ENCODE measurements at regions of chr4 and their contacts with region 1.

Region 1: GRCh38 chr4:87235020-87235671 is 14.7 kb upstream of the KLHL8 start:
- DNase-seq: peak in 1 of 2 donors; percentile 10
- ATAC-seq: no peak
- H3K4me3 ChIP-seq: peak overlapping the region; percentile 11
- H3K4me3 Mint-ChIP-seq: peak overlapping the region; percentile 89
- H3K27ac ChIP-seq: no peak overlapping the region
- H3K27ac Mint-ChIP-seq: peak overlapping the region; percentile 78 to 87
- H3K4me1 ChIP-seq: peaks cover 4% of the 10 kb centered on the region
- H3K4me1 Mint-ChIP-seq: peaks cover 0 to 9% of the 10 kb centered on the region in 2 donors
- H3K27me3 ChIP-seq: no peaks in the 10 kb centered on the region
- H3K27me3 Mint-ChIP-seq: peaks cover 7 to 14% of the 10 kb centered on the region in 2 donors
- CTCF ChIP-seq: no peak

Region 2: GRCh38 chr4:86921608-86922252 is 313.4 kb before region 1 on chr4:
- intact Hi-C with region 1: loop called (anchors 2 kb)
- DNase-seq: no peak
- ATAC-seq: no peak
- H3K4me3 ChIP-seq: no peak overlapping the region
- H3K4me3 Mint-ChIP-seq: no peak overlapping the region
- H3K27ac ChIP-seq: no peak overlapping the region
- H3K27ac Mint-ChIP-seq: no peak overlapping the region
- H3K4me1 ChIP-seq: no peaks in the 10 kb centered on the region
- H3K4me1 Mint-ChIP-seq: peaks cover 0 to 4% of the 10 kb centered on the region in 2 donors
- H3K27me3 ChIP-seq: no peaks in the 10 kb centered on the region
- H3K27me3 Mint-ChIP-seq: no peaks in the 10 kb centered on the region
- CTCF ChIP-seq: no peak

Region 3: DNA sequence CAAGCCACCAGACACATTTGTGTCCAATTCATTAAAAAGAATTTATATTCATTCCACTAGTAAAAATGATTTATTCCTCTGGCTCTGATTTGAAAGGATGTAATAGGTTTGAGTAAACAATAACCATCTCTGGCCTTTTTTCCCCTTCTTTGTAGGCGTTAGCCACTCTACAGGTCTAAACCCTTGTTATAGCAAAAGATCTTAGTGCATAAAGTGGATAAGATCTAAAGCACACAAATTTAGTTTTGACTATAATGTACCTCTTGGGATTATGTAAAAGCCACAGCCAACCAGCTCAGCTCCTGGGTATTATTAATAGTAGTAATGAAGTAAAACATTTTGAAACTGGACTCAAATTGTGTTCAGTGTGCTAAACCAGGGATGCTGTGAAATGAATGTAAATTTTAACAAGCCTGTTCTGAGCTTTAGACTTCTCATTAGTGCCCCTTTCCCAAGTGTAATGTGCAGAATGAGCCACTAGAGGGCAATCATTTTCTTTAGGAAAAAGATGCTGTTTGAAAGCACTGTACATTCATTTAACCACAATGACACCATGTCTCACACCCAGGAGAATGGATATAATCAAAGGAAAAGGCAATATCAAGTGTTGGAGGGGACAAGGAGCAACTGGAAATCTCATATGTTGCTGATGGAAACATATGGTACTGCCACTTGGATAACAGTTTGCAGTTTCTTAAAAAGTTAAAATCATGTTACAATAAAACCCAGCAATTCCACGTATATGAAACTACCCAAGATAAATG is 84.5 kb before region 1 on chr4:
- intact Hi-C with region 1: loop called (anchors 1 kb)
- DNase-seq: peak in 1 of 2 donors; percentile 82
- ATAC-seq: peak; percentile 79 to 93 (median 85)
- H3K4me3 ChIP-seq: no peak overlapping the region
- H3K4me3 Mint-ChIP-seq: no peak overlapping the region
- H3K27ac ChIP-seq: no peak overlapping the region
- H3K27ac Mint-ChIP-seq: no peak overlapping the region
- H3K4me1 ChIP-seq: no peaks in the 10 kb centered on the region
- H3K4me1 Mint-ChIP-seq: peaks cover 6% of the 10 kb centered on the region in 2 donors
- H3K27me3 ChIP-seq: no peaks in the 10 kb centered on the region
- H3K27me3 Mint-ChIP-seq: no peaks in the 10 kb centered on the region
- CTCF ChIP-seq: peak; percentile 94

Region 4: GRCh38 chr4:87209696-87210095 is 25.4 kb before region 1 on chr4:
- intact Hi-C with region 1: no loop called
- DNase-seq: peak; percentile 27 to 46
- ATAC-seq: peak; percentile 81 to 96 (median 93)
- H3K4me3 ChIP-seq: peak overlapping the region; percentile 26
- H3K4me3 Mint-ChIP-seq: peak overlapping the region; percentile 90
- H3K27ac ChIP-seq: peak overlapping the region; percentile 17
- H3K27ac Mint-ChIP-seq: peak overlapping the region; percentile 82 to 90
- H3K4me1 ChIP-seq: peaks cover 5% of the 10 kb centered on the region
- H3K4me1 Mint-ChIP-seq: peaks cover 13 to 16% of the 10 kb centered on the region in 2 donors
- H3K27me3 ChIP-seq: no peaks in the 10 kb centered on the region
- H3K27me3 Mint-ChIP-seq: no peaks in the 10 kb centered on the region
- CTCF ChIP-seq: no peak

Measured in natural killer cell (primary cell).